Stomach (tissue), 19 donors: ENCODE measurements at regions of chr9 and their contacts with region 1.

Region 1: DNA sequence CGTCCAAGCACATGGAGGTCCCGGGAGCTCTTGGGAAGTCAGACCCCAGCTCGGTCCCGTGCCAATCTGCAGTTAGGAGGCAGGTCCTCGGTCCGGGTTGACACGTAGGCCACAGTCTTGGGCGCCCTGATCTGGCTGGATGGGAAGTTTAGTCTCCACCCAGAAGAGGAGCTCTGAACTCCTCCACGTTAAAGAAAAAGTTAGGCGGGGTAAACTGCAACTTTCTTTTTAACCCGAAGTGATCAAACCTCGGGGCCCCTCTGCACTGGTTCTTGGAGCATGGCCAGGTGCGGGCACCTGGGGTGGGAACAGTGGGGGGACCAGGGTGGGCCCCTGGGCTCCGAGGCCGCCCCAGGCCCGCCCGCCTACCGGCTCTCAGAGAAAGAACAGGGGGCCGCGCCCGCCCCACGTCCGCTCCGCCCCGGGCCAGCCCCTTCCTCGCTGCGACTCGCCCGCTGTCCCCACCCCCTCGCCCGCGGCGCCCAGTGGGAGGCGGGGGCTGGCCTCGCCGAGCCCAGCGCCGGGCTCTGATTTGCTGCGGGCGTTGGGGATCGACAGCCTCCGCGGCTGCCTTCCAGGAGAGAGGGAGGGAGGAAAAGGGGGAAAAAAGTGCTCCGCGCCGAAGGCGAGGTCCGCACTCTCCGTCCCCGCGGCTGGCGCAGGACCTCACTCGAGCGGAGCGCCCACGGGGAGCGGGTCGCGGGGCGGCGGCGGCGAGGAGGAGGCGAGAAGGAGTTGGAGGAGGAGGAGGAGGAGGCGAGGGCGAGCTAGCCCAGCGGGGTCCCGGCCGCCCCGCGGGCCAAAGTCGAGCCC is at the start of gene COL5A1:
- DNase-seq: peak; percentile 83 to 97
- H3K4me3 ChIP-seq: peak within 1 kb of the TSS; percentile 59 to 77 (median 69)
- H3K27ac ChIP-seq: peak within 1 kb of the TSS; percentile 74 to 96 (median 88)
- H3K4me1 ChIP-seq: peaks cover 21 to 46% (median 32%) of the 10 kb centered on the region in 4 donors
- H3K27me3 ChIP-seq: peaks cover 0 to 45% (median 27%) of the 10 kb centered on the region in 3 donors
- CTCF ChIP-seq: peak in 3 of 7 experiments; percentile 11 to 22 (median 17)
- EP300 ChIP-seq: no peak
- POLR2A ChIP-seq: no peak
- total RNA-seq, gene COL5A1: 17.5 to 205 (median 48.2) TPM

Region 2: GRCh38 chr9:134469041-134469875 is 172.1 kb before region 1 on chr9:
- intact Hi-C with region 1: loop called (anchors 10 kb)
- DNase-seq: peak in 1 of 2 donors; percentile 84
- H3K4me3 ChIP-seq: no peak overlapping the region
- H3K27ac ChIP-seq: peak overlapping the region; percentile 30 to 73 (median 35)
- H3K4me1 ChIP-seq: peaks cover 0 to 24% (median 17%) of the 10 kb centered on the region in 4 donors
- H3K27me3 ChIP-seq: no peaks in the 10 kb centered on the region
- CTCF ChIP-seq: no peak
- EP300 ChIP-seq: no peak
- POLR2A ChIP-seq: no peak

Region 3: GRCh38 chr9:135821733-135822373 is 1180.5 kb after region 1 on chr9:
- intact Hi-C with region 1: no loop called
- DNase-seq: peak in 1 of 2 donors; percentile 15
- H3K4me3 ChIP-seq: no peak overlapping the region
- H3K27ac ChIP-seq: no peak overlapping the region
- H3K4me1 ChIP-seq: no peaks in the 10 kb centered on the region
- H3K27me3 ChIP-seq: no peaks in the 10 kb centered on the region
- CTCF ChIP-seq: no peak
- EP300 ChIP-seq: no peak
- POLR2A ChIP-seq: no peak